ENCODE measurements at regions of chr5 and their contacts with region 1.

Region 1: DNA sequence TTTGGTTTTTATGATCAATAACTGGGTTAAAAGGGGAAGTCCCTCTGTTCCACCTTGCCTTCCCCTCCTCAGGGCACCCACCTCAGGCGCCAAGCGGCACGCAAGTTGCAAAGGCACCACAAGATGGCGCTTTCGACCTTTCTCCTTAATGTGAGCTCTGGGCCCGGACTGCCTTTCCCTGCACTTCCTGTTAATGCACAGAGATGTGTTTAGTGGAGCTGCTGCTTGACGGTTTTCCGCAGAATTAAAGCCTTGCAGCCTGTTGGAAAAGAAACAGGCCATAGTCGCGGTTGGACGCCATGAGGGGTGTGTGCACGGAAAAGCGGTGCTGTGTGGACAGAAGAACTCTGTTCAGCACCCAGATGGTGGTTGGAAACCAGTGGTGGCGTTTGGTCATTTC is 17.9 kb downstream of the CXCL14 start:
- DNase-seq: peak; percentile 85 to 87

Region 2: GRCh38 chr5:135191084-135191826 is 369.6 kb before region 1 on chr5:
- in situ Hi-C with region 1: no loop called
- DNase-seq: peak; percentile 53 to 89

Region 3: GRCh38 chr5:135678640-135679268 is 117.9 kb after region 1 on chr5:
- in situ Hi-C with region 1: no loop called
- DNase-seq: no peak

Region 4: DNA sequence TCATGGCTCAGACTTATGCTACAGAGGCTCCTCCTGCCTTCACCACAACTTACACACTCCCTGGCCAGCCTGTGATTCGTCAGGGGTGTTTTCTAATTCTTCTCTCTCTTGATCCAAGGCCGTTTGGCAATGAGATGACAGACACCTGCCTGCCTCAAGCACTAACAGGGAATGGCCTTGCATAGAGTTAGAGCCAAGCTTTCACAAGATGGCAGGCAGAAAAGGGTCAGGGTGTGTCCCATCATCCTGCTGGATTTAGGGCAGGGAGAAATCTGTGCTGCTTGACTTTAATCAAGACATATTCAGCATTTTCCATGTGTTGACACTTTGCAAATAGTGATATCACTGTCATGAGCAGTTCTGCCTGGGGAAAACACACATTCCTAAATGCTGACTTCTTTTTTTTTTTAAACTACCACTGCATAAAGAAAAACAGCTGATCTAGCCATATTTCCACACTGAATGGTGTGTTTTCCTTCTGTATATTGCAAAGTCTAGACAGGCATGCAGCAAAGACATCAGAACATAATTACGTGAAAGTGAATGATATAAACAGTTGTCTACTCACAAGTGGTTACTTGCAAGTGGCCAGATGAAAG is 178.6 kb after region 1 on chr5:
- in situ Hi-C with region 1: no loop called
- DNase-seq: no peak

Region 5: GRCh38 chr5:135829681-135830383 is 269.0 kb after region 1 on chr5:
- in situ Hi-C with region 1: loop called (anchors 25 kb)
- DNase-seq: peak; percentile 72 to 82